HEK293 (cell line): ENCODE measurements at regions of chr6 and their contacts with region 1.

Region 1: DNA sequence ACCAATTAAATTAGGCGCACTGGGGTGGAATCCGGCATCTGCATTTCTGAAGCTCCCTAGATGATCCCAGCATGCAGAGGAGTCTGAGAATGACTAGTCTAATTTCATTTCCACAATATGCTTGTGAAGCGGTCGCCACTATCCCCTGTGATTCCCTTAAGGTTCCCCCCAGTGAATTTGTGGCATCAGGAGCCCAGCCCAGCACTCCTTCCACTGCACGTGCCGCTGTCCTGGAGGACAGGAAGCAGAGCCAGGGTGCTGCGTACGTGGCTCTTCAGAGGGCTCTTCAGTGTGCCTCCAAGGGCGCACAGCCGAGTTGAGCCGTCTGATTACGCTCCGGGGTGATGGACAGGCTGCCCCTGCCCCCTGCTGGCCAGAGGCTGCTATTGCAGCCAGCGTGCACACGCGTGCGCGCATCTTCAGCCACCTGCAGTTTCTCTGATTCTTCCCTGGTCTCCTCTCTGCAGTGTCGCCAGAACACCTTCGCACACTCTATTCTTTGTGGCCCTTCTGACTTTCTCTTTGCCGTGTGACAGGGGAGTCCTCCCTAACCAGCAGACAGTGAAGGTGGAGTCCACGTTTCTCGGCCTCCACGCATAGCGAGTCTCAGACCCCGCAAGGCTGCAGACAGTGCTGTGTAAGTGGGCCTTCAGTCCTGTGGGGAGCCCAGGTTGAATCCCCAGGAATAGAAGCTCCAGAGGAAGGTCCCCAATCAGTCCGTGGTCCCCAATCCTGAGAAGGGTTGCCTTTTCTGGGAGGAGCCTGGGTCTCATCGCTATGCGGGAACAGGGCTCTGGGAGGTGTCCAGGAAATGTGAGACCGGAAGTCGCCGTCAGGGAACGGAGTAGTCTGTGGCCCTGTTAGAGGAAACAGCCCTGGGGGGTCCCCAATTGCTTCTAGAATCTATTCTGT is 16.5 kb upstream of the NCR2 start:
- H3K4me3 ChIP-seq: peak overlapping the region; percentile 26
- H3K27ac ChIP-seq: no peak overlapping the region
- H3K4me1 ChIP-seq: peaks cover 9% of the 10 kb centered on the region
- CTCF ChIP-seq: peak; percentile 97

Region 2: GRCh38 chr6:41071923-41072675 is 246.8 kb before region 1 on chr6 and contains the start of gene OARD1:
- CTCF ChIA-PET with region 1: interaction called, 11 read pairs
- POLR2A ChIA-PET with region 1: interaction called, 7 read pairs
- H3K4me3 ChIP-seq: peak within 1 kb of the TSS; percentile 95
- H3K27ac ChIP-seq: peak within 1 kb of the TSS; percentile 94
- H3K4me1 ChIP-seq: 0 out of 2 replicates have a peak, but pooled peaks cover 2% of the 10 kb centered on the region
- CTCF ChIP-seq: no peak

Region 3: DNA sequence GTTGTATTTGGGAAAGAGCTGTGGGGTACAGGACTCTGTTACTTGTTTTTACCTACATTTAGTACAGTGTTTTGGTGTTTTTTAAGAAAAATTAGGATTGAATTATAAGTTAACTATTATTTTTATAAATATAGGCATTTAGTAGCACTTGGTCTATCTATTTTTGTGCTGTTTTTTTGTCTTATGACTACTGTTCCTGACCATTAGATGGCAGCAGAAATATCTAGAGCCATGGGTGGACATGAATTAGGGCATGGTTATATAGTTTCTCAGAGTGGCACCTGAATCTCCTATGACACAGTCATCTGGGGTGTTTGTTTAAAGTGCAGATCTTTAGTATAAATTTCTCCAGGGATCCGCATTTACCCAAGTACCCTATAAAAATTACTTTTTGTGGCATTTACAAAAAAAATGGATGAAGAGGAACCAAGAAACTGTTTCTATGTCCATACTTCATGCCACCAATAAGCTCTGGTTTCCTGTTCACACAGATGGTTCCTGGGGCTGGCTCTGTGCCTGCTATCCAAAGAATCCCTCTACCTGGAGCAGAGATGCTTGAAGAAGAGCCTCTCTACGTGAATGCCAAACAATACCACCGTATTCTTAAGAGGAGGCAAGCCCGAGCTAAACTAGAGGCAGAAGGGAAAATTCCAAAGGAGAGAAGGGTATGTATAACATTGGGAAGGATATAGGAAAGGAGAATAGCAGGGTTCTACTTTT is 226.3 kb before region 1 on chr6:
- CTCF ChIA-PET with region 1: interaction called, 21 read pairs
- POLR2A ChIA-PET with region 1: no interaction called
- H3K4me3 ChIP-seq: no peak overlapping the region
- H3K27ac ChIP-seq: no peak overlapping the region
- H3K4me1 ChIP-seq: no peaks in the 10 kb centered on the region
- CTCF ChIP-seq: no peak; the same call in 1 of the 2 replicates

Region 4: DNA sequence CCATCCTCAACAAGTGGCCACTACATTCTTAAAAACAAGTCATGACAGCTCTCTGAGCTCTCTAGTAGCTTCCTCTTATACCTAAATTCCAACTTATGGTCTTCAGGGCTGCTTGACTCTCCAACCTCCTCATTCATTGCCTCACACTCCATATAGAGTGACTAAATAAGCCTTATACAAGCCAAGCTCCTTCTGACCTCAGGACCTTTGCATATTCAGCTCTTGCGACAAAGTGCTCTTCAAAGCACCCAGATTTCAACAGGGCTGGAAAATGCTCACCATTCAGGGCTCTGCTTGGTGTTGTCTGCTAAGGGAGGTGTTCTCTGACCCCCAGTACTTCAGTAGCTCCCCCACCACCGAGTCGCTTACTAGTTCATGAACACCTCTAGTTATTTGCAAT is 121.7 kb before region 1 on chr6:
- CTCF ChIA-PET with region 1: interaction called, 10 read pairs
- POLR2A ChIA-PET with region 1: no interaction called
- H3K4me3 ChIP-seq: no peak overlapping the region
- H3K27ac ChIP-seq: no peak overlapping the region
- H3K4me1 ChIP-seq: no peaks in the 10 kb centered on the region
- CTCF ChIP-seq: no peak

Region 5: GRCh38 chr6:41278699-41279405 is 40.1 kb before region 1 on chr6:
- CTCF ChIA-PET with region 1: interaction called, 26 read pairs
- POLR2A ChIA-PET with region 1: interaction called, 3 read pairs
- H3K4me3 ChIP-seq: no peak overlapping the region
- H3K27ac ChIP-seq: no peak overlapping the region
- H3K4me1 ChIP-seq: no peaks in the 10 kb centered on the region
- CTCF ChIP-seq: peak; percentile 73

Region 6: GRCh38 chr6:41306187-41306854 is 12.6 kb before region 1 on chr6:
- CTCF ChIA-PET with region 1: interaction called, 177 read pairs
- POLR2A ChIA-PET with region 1: interaction called, 3 read pairs
- H3K4me3 ChIP-seq: no peak overlapping the region
- H3K27ac ChIP-seq: no peak overlapping the region
- H3K4me1 ChIP-seq: no peaks in the 10 kb centered on the region
- CTCF ChIP-seq: no peak

Region 7: DNA sequence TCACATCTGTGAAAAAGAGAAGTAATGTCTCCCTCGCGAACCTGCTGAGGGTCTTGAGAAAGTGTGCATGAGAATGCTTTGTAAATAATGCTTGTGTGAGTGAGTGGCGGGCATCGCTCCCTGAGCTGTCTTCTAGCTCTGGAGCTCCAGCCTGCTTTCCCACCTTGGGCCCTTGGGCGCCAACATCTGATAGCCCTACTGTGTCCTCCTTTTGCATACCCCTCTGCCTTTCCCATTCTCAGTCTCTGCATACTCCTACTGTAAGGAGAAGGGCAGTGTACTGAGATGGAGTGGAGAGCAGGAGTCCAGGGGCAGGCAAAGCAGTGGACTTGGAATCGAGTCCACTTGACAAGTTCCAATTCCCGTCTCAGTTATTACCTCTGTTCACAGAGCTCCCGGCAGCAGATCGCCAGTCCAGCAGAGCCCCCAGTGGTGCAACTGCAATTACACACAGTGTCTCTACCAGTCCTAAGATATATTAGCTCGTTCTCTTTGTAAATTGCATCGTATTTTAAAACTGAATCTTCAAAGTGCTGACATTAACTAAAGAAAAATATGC is 15.7 kb after region 1 on chr6:
- CTCF ChIA-PET with region 1: interaction called, 25 read pairs
- POLR2A ChIA-PET with region 1: interaction called, 5 read pairs
- H3K4me3 ChIP-seq: no peak overlapping the region
- H3K27ac ChIP-seq: no peak overlapping the region
- H3K4me1 ChIP-seq: no peaks in the 10 kb centered on the region; the same call in 1 of the 2 replicates
- CTCF ChIP-seq: no peak; the same call in 1 of the 2 replicates